Activated CD4-positive, alpha-beta T cell treated with anti-CD3 and anti-CD28 coated beads, Interleukin-2, amount 10 ng/mL, durations not matched to agents 24 days and 14 days (primary cell): ENCODE measurements at regions of chr20 and their contacts with region 1.

Region 1: GRCh38 chr20:60057123-60057801 is 99.0 kb downstream of the CDH26 start:
- DNase-seq: peak; percentile 91
- H3K4me3 Mint-ChIP-seq: peak overlapping the region; percentile 76
- H3K27ac Mint-ChIP-seq: peak overlapping the region; percentile 88
- H3K4me1 Mint-ChIP-seq: peaks cover 34% of the 10 kb centered on the region
- H3K27me3 Mint-ChIP-seq: no peaks in the 10 kb centered on the region

Region 2: DNA sequence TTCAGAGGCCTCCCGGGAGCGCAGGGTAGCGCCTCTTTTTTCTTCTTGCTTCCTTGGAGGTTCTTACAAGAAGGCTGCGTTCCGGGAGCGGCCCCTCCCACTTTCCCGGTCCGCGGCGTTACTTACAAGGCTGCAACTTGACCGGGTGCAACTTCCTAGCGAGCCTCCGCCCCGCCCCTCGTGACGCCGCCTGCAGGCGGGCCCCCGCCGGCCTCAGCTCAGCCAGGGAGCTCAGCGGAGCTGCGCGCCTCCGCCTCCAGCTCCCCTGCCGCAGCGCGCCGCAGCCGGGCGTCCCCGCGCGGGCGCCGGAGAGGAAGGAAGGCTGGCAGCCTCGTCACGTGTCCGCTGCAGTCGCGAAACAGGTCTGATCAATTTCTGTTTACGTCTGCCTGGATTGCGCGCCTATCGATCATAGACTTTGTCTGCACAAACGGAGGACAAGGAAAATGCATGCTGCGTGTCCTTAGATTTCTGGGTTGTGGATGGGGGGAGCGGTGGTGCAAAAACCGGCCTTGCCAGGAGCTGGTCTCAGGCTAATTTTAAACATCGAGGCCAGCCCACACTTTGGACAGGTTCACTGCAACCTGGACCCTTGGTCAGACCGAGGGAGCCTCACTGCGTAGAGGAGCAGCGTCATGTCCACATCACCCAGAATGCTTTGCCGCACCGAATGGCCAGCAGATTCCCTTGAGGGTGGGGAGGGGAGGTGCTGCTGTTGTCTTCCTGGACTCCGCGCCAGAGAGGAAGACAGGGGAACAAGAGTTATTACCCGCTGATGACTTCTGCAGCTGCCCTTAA is 116.9 kb before region 1 on chr20 and contains the starts of genes FAM217B and PPP1R3D:
- intact Hi-C with region 1: loop called (anchors 2 kb)
- DNase-seq: peak; percentile 98
- H3K4me3 Mint-ChIP-seq: peak within 1 kb of the TSS; percentile 99
- H3K27ac Mint-ChIP-seq: peak within 1 kb of the TSS; percentile 99
- H3K4me1 Mint-ChIP-seq: peaks cover 31% of the 10 kb centered on the region
- H3K27me3 Mint-ChIP-seq: no peaks in the 10 kb centered on the region
- total RNA-seq, gene FAM217B: 26.6 and 29.0 TPM in 2 replicates
- total RNA-seq, gene PPP1R3D: 6.1 and 6.4 TPM in 2 replicates

Region 3: GRCh38 chr20:60142587-60142986 is 85.3 kb after region 1 on chr20:
- intact Hi-C with region 1: no loop called
- DNase-seq: no peak
- H3K4me3 Mint-ChIP-seq: no peak overlapping the region
- H3K27ac Mint-ChIP-seq: no peak overlapping the region
- H3K4me1 Mint-ChIP-seq: peaks cover 4% of the 10 kb centered on the region
- H3K27me3 Mint-ChIP-seq: no peaks in the 10 kb centered on the region

Region 4: DNA sequence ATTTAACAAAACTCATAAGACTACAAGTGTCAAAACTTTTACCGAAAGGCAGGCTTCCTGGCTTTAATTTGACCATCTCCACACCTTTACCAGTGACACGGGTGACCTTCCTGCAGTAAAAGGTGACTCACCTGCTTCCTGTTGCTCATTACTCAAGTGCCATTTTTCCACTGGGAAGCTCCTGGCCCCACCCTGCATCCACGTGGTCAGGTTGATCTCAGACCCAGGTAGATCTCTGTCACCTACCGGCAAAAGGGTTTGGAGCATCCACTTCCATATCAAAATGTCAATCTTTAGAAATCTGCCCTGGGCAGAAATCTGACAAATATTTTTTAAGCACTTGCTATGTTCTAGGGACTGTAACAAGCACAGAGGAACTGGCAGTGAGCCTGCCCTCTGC is 1162.9 kb after region 1 on chr20:
- intact Hi-C with region 1: loop called (anchors 5 kb)
- DNase-seq: no peak
- H3K4me3 Mint-ChIP-seq: no peak overlapping the region
- H3K27ac Mint-ChIP-seq: no peak overlapping the region
- H3K4me1 Mint-ChIP-seq: no peaks in the 10 kb centered on the region
- H3K27me3 Mint-ChIP-seq: no peaks in the 10 kb centered on the region